Common myeloid progenitor, CD34-positive (primary cell): ENCODE measurements at regions of chr5 and their contacts with region 1.

Region 1: DNA sequence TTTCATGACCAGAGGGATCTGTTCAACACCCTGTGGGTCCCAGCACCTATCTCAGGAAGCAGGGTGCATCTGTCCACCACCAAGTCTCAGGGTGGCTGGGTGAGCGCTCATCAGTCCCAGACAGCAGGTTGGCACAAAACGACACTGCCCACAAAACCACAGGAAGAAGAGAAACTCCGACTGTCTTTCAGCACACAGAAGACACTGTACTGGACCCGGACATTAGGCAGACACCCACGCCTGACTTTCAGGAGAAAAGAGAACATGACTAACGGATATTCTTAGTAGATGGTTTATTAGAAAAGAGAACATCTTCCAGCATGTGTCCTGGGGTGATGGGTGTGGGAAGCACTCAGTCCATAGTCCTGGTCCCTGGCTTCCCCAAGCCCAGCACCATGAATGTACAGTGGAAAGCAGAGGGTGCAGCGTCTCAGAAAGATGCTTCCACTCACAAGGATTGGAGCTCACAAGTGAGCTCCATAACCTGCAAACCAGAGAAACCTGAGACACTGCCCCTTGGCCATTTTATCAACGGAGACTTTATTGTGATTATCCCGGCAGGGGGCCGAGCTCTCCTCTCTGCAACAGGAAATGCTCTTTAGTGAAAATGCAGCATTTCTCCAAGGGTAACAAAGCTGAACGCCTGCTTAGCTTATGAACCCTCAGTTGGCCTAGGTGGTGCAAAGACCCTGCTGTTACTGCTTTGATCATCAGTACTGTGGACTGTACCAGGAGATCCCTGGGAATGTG is 35.8 kb upstream of the LCP2 start:
- DNase-seq: peak; percentile 50 to 89 (median 83)
- H3K4me3 ChIP-seq: peak overlapping the region in 2 of 7 experiments; percentile 10 to 46
- H3K27ac ChIP-seq: peak overlapping the region in 1 of 2 experiments; percentile 49
- H3K4me1 ChIP-seq: peaks cover 32 to 90% (median 71%) of the 10 kb centered on the region in 4 experiments
- H3K27me3 ChIP-seq: no peaks in the 10 kb centered on the region

Region 2: DNA sequence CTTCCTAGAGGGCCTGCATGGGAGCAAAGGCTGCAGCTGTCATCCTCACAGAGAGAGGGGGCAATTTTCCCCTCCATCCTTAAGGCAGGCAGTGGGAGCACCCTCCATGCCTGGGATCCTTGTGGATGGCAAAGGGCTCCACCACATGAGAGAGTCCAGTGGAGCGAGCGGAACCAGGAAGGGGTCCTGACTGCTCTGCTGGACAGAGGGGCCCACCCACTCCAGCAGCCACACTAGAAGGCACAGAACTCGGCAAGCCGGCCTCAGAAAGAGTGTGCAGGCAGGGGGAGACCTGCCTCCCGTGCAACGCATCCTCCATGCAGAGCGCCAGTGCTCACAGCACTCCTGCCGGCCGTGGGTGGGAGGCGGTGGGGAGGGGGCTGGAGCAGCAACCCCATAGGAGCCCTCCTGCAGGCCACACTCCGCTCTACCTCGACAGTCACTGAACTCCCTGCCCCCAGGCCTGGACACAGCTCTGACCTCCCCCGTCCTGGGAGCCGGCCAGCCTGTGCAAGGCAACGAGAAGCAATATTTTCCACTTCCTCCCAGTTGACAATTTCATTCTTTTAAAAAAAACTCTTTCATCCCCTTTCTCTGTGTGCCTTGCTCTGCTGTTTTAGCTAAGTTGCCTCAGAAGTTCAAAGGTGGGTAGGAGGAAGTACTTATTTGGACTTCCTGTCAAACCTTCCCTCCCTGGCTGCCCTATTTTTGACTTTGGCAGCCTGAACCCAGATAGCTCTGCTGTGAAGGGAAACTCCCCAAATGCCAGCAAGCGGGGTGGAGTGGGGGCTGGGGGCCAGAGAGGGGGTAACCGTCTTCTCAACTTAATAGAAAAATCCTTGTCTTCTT is 30.5 kb before region 1 on chr5:
- CTCF ChIA-PET with region 1: interaction called, 75 read pairs
- POLR2A ChIA-PET with region 1: interaction called, 3 read pairs
- DNase-seq: peak; percentile 72 to 90 (median 88)
- H3K4me3 ChIP-seq: peak overlapping the region in 3 of 7 experiments; percentile 20 to 45 (median 29)
- H3K27ac ChIP-seq: peak overlapping the region in 1 of 2 experiments; percentile 40
- H3K4me1 ChIP-seq: peaks cover 21 to 65% (median 48%) of the 10 kb centered on the region in 4 experiments
- H3K27me3 ChIP-seq: no peaks in the 10 kb centered on the region

Region 3: DNA sequence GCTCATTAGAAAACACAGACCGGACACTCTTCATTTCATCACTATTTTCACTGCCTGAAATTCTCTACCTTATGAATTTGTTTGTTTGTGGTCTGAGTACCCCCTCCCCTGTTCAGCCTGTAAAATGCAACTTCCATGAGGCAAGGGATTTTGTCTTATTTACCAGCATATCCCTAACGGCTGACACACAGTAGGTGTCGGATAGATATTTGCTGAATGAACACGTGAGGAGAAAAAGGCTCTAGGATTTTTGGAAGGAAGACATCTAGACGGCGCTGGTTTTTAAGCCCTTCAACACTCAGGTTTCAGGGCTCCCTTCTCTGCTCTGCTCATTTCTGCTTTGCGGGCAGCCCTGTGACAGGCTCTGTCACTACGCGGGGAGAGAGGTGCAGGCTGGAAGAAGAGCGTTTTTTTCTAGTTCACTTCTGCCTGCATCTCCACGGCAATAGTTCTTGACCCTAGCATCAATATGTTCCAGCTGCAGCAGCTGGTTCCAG is 14.8 kb after region 1 on chr5:
- CTCF ChIA-PET with region 1: interaction called, 32 read pairs
- POLR2A ChIA-PET with region 1: interaction called, 3 read pairs
- DNase-seq: peak; percentile 39 to 54 (median 54)
- H3K4me3 ChIP-seq: no peak overlapping the region
- H3K27ac ChIP-seq: no peak overlapping the region
- H3K4me1 ChIP-seq: peaks cover 0 to 17% (median 9%) of the 10 kb centered on the region in 4 experiments
- H3K27me3 ChIP-seq: no peaks in the 10 kb centered on the region